ENCODE measurements at regions of chr13 and their contacts with region 1.

Region 1: GRCh38 chr13:49996951-49997895 is at the start of gene TRIM13:
- DNase-seq: peak; percentile 65
- H3K4me3 ChIP-seq: peak within 1 kb of the TSS; percentile 83
- H3K27ac ChIP-seq: peak within 1 kb of the TSS; percentile 96
- H3K27me3 ChIP-seq: no peaks in the 10 kb centered on the region
- CTCF ChIP-seq: peak; percentile 87
- polyA plus RNA-seq, gene TRIM13: 25.4 and 33.3 TPM in 2 replicates

Region 2: DNA sequence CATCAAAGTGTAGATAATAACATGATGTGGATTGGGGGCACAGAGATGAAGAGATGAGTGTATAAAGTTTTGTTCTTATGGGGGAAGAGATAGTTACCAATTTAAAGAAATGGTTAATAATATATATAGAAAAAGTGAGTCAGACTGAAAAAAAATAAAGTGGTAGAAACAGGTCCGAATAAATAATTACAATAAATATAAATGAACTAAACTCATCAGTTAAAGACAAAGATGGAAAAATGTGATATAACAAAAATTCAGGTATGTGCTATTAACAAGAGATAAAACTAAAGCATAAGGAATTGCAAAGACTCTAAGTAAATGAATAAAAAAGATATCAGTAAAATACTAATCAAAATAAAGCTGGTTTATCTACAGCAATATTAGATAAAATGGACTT is 143.7 kb before region 1 on chr13:
- CTCF ChIA-PET with region 1: no interaction called
- POLR2A ChIA-PET with region 1: no interaction called
- DNase-seq: no peak
- H3K4me3 ChIP-seq: no peak overlapping the region
- H3K27ac ChIP-seq: no peak overlapping the region
- H3K27me3 ChIP-seq: no peaks in the 10 kb centered on the region
- CTCF ChIP-seq: no peak

Region 3: DNA sequence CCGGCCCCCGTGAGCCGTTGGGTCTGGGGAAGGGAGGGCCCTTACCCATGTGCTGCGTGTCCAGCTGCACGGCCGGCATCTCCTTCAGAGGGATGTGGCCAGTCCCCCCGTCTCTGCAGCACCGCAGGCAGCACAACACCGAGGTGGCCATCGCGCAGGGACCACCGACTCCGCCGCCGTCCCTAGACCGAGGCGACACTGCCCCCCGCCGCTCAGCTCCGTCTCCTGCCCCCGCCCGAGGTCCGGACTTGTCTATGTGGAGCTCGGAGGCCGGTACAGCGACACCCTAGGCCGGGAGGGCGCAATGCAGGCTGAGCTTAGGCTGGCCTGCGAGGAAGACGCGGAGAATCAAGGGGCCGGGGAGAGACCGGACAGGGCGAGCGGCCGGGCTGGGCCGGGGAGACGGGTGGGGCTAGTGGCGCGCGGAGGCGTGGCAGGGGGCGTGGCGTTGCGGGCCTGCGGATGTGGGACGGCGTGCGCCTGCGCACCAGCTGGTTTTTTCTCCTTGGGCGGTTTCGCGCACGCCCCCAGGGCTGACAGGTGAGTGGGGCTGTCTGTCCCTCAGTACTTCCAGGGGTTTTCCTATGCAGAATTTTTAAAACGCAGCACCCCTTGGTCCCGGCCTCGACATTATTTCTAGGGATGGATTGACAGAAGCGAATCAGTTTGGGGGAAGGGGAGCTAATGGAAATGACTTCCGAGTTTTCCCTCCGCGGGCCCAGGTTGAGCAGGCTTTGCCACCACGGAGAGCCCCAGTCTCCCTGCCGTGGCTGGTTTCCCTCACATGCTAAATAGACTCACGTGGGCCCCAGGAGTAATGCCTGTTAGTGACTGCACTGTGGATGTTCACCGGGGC is 60.9 kb before region 1 on chr13 and contains the start of gene SPRYD7:
- CTCF ChIA-PET with region 1: interaction called, 11 read pairs
- POLR2A ChIA-PET with region 1: interaction called, 8 read pairs
- DNase-seq: peak; percentile 95
- H3K4me3 ChIP-seq: peak within 1 kb of the TSS; percentile 93
- H3K27ac ChIP-seq: peak within 1 kb of the TSS; percentile 68
- H3K27me3 ChIP-seq: no peaks in the 10 kb centered on the region
- CTCF ChIP-seq: peak; percentile 85
- polyA plus RNA-seq, gene SPRYD7: 6.4 and 8.0 TPM in 2 replicates

Region 4: GRCh38 chr13:50069261-50069660 is 72.0 kb after region 1 on chr13:
- CTCF ChIA-PET with region 1: interaction called, 10 read pairs
- POLR2A ChIA-PET with region 1: interaction called, 5 read pairs
- DNase-seq: no peak
- H3K4me3 ChIP-seq: no peak overlapping the region
- H3K27ac ChIP-seq: no peak overlapping the region
- H3K27me3 ChIP-seq: no peaks in the 10 kb centered on the region
- CTCF ChIP-seq: no peak

Region 5: GRCh38 chr13:50123862-50124536 is 126.8 kb after region 1 on chr13:
- CTCF ChIA-PET with region 1: interaction called, 3 read pairs
- POLR2A ChIA-PET with region 1: interaction called, 13 read pairs
- DNase-seq: peak; percentile 94
- H3K4me3 ChIP-seq: peak overlapping the region; percentile 88
- H3K27ac ChIP-seq: peak overlapping the region; percentile 98
- H3K27me3 ChIP-seq: peaks cover 15% of the 10 kb centered on the region
- CTCF ChIP-seq: 0 out of 2 replicates have a peak, but pooled peaks have one; percentile 7

Region 6: DNA sequence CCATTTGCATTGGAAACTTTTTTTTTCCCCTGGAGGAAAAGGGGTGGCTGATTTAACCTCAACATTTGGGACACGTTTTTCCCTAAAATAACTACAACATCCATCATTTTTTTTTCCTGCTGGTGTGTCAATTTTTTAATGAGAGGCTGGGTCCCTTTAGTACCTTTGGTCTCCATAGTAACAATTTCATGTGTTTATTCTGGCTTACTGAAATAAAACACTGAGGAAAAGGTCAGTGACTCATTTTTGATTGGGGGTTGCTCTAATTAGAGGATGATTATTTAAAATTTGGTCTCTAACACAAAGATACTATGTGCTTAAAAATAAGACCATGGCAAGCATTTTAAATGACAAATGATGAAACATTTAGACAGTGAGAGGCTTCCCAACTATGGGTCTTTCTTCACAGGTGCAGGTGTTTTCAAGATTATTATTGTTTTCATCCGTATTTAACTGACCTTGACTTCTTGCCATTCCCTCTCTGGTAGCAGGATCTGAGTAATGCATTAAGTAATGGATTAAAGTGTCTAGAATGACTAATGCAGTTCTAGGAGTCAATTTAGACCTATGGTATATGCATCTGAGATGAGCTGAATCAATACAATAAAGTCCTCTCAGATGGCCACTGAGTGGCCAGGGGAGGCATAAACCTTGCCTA is 424.4 kb after region 1 on chr13:
- CTCF ChIA-PET with region 1: no interaction called
- POLR2A ChIA-PET with region 1: no interaction called
- DNase-seq: no peak
- H3K4me3 ChIP-seq: no peak overlapping the region
- H3K27ac ChIP-seq: no peak overlapping the region
- H3K27me3 ChIP-seq: no peaks in the 10 kb centered on the region
- CTCF ChIP-seq: no peak

Region 7: GRCh38 chr13:50617134-50617721 is 620.0 kb after region 1 on chr13:
- CTCF ChIA-PET with region 1: no interaction called
- POLR2A ChIA-PET with region 1: no interaction called
- DNase-seq: no peak
- H3K4me3 ChIP-seq: no peak overlapping the region
- H3K27ac ChIP-seq: no peak overlapping the region
- H3K27me3 ChIP-seq: peaks cover 10% of the 10 kb centered on the region
- CTCF ChIP-seq: no peak

Region 8: GRCh38 chr13:50911937-50912795 is 914.9 kb after region 1 on chr13:
- CTCF ChIA-PET with region 1: interaction called, 10 read pairs
- POLR2A ChIA-PET with region 1: no interaction called
- DNase-seq: peak; percentile 79
- H3K4me3 ChIP-seq: no peak overlapping the region
- H3K27ac ChIP-seq: no peak overlapping the region
- H3K27me3 ChIP-seq: no peaks in the 10 kb centered on the region
- CTCF ChIP-seq: peak; percentile 82

Measured in AG04450 (cell line).